Activated CD8-positive, alpha-beta memory T cell treated with anti-CD3 and anti-CD28 coated beads, Interleukin-2, amount 10 ng/mL, durations not matched to agents 7 days and 5 days (primary cell): ENCODE measurements at regions of chr3 and their contacts with region 1.

Region 1: DNA sequence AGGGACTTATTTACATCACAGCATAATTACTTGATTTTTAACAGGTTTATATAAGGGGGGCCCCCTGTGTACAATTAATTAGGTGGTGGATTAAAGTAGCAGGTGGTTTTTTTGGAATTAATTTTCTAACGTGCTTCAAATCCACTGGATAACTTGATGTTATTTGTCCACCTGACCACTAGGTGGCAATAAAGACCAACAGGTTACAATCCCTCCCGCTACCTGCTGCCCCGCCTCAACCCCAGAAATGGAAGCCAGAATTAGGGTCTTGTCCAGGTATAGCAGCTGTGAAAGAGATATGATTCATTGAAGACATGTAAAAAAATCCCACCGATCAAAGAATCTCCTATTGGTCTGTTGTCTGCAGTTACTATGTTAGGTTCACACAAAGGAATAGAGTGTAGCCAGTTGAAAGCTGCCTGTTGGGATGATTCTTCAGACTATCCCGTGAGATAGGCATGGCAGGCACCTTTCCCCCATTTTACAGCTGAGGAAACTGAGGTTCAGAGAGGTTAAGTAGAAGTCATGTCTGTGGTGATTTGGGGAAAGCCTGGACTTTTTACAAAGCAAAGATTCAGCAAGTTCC is 44.0 kb downstream of the MFSD1 start:
- DNase-seq: no peak
- ATAC-seq: peak; percentile 41
- H3K4me3 Mint-ChIP-seq: no peak overlapping the region
- H3K27ac Mint-ChIP-seq: no peak overlapping the region
- H3K4me1 Mint-ChIP-seq: peaks cover 16% of the 10 kb centered on the region
- H3K27me3 Mint-ChIP-seq: no peaks in the 10 kb centered on the region

Region 2: DNA sequence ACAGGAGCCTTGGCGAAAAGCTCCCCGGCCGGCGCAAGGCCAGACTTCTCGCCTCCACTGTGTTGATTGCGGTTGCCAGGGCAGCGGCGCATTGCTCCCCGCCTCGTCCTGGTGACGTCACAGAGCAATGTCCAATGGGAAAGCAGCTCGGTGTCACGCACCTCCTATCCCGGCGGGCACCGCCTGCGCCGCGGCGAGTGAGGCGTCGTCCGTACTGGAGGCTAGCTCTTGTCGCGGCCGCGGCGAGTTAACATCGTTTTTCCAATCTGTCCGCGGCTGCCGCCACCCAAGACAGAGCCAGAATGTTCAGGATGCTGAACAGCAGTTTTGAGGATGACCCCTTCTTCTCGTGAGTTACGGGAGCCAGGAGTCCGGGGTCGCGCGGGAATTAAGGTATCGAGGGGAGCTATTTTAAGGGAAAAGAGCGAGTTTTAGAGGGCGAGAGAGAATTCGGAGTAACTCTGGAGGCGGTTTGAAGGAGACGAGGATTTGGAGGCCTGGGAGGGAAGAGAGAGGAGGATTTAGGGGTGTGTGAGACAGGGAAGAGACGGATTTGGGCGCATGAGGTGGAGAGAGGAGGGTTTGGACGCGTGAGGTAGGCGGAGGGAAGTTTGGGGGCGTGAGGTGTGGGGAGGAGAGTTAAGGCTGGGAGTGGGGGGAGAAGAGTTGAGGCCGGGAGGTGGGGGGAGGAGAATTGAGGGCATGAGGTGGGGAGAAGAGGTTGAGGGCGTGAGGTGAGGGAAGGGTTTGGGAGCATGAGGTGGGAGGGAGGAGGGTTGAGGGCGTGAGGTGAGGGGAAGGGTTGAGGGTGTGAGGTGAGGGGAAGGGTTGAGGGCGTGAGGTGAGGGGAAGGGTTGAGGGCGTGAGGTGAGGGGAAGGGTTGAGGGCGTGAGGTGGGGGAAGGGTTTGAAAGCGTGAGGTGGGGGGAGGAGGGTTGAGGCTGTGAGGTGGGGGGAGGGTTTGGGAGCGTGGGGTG is 274.6 kb before region 1 on chr3 and contains the start of gene MLF1:
- CTCF ChIA-PET with region 1: no interaction called
- DNase-seq: peak; percentile 91
- ATAC-seq: peak; percentile 99
- H3K4me3 Mint-ChIP-seq: peak within 1 kb of the TSS; percentile 73
- H3K27ac Mint-ChIP-seq: peak within 1 kb of the TSS; percentile 66
- H3K4me1 Mint-ChIP-seq: peaks cover 12% of the 10 kb centered on the region
- H3K27me3 Mint-ChIP-seq: peaks cover 27% of the 10 kb centered on the region
- total RNA-seq, gene MLF1: 2.4 to 3.3 TPM

Region 3: GRCh38 chr3:158672293-158673176 is 173.3 kb before region 1 on chr3 and contains the start of gene LXN:
- CTCF ChIA-PET with region 1: no interaction called
- DNase-seq: peak; percentile 90
- ATAC-seq: peak; percentile 100
- H3K4me3 Mint-ChIP-seq: peak within 1 kb of the TSS; percentile 95
- H3K27ac Mint-ChIP-seq: peak within 1 kb of the TSS; percentile 93
- H3K4me1 Mint-ChIP-seq: peaks cover 17% of the 10 kb centered on the region
- H3K27me3 Mint-ChIP-seq: no peaks in the 10 kb centered on the region
- total RNA-seq, gene LXN: 6.7 to 7.5 TPM

Region 4: DNA sequence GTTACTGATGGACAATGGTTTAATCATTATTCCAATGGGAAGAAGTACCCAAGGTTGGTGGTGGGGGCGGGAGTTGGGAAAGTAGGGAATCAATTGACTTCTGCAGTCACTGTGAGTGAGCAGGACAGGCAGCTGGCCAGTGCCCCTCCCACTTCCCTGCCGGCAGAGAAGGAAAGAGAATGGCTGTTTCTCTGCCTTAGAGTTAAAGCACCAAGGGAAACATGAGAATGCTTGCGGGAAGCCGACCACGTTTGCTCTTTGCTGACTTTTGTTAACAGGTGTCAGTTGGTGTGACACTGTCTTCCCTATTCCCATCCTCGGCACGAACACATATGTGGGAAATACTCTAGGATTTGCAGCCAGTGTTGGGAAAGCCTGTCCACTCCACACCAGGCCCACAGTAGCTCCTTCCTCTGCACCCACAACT is 77.5 kb before region 1 on chr3:
- CTCF ChIA-PET with region 1: no interaction called
- DNase-seq: no peak
- ATAC-seq: no peak
- H3K4me3 Mint-ChIP-seq: no peak overlapping the region
- H3K27ac Mint-ChIP-seq: no peak overlapping the region
- H3K4me1 Mint-ChIP-seq: no peaks in the 10 kb centered on the region
- H3K27me3 Mint-ChIP-seq: no peaks in the 10 kb centered on the region

Region 5: DNA sequence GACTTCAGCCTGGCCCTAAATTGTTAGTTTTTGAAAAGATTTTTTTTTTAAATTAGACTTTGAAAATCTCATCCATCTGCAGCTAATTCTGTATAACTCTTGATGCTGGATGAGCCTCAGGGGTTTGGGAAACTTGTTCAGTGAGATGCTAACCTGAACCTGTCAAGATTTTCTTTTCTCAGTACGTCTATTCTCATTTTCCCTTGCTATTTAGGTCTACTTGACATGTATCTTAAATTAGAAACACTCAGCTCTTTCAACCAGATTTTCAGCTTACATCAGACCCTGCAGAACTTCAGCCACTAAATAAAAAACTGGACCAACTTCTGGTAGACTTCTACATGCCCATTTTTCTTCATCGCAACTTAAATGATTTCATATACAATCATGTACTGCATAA is 17.4 kb after region 1 on chr3:
- CTCF ChIA-PET with region 1: interaction called, 10 read pairs
- DNase-seq: no peak
- ATAC-seq: no peak
- H3K4me3 Mint-ChIP-seq: no peak overlapping the region
- H3K27ac Mint-ChIP-seq: no peak overlapping the region
- H3K4me1 Mint-ChIP-seq: no peaks in the 10 kb centered on the region
- H3K27me3 Mint-ChIP-seq: no peaks in the 10 kb centered on the region

Region 6: GRCh38 chr3:159260049-159260662 is 414.3 kb after region 1 on chr3:
- CTCF ChIA-PET with region 1: interaction called, 66 read pairs
- DNase-seq: peak; percentile 47
- ATAC-seq: peak; percentile 39
- H3K4me3 Mint-ChIP-seq: no peak overlapping the region
- H3K27ac Mint-ChIP-seq: no peak overlapping the region
- H3K4me1 Mint-ChIP-seq: no peaks in the 10 kb centered on the region
- H3K27me3 Mint-ChIP-seq: peaks cover 9% of the 10 kb centered on the region